ENCODE measurements at regions of chr13 and their contacts with region 1.

Region 1: DNA sequence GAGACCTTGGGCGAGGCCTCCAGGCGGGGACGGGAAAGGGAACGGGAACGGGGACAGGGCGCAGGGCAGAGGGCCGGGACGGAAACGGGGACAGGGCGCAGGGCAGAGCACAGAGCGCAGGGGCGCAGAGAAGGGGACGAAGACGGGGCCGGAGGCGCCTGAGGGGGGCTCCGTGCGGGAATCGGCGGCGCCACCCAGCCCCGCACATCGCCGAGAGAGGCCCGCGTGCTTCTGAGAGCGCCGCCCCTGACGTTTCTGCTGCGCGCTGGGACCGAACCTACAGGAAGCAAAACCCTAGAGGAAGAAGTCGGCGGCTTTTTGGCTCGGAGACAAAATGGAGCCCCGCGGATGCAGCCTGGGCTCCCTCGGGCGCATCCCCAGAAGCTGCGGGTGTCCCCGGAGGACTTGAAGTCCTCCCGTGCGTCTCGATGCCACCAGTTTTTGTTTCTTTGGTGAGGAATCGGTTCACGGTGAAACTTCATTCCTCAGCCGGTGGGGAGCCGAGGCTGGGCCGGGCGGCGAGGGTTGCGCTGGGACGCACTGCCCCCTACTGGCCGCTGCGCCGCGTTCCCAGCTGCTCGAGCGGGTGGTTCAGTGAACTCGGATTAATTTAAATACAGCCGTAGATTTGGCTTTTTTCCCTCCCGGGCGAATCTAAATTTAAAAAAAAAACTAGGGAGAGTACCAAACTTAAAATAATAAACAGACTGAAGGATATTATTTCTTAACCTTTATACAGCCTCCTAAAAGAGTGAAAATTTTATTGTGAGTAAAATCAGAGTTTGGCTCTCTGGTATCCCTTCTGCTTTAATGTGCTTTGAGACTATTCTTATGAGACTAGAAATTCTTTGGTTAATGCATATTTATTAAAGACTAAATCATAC is 350.0 kb upstream of the ARGLU1 start:
- DNase-seq: no peak
- ATAC-seq: peak; percentile 99
- H3K4me3 ChIP-seq: peak overlapping the region; percentile 53 to 75 (median 62); a peak in 5 of 6 replicates
- H3K27ac ChIP-seq: no peak overlapping the region
- H3K4me1 ChIP-seq: peaks cover 6% of the 10 kb centered on the region; the same call in 1 of the 2 replicates
- H3K27me3 ChIP-seq: peaks cover 0 to 6% of the 10 kb centered on the region in 2 experiments; a peak in 2 of 5 replicates
- CTCF ChIP-seq: peak; percentile 88
- EP300 ChIP-seq: no peak
- POLR2A ChIP-seq: no peak
- RAD21 ChIP-seq: peak; percentile 61

Region 2: GRCh38 chr13:106063591-106064313 is 854.2 kb before region 1 on chr13:
- CTCF ChIA-PET with region 1: no interaction called
- POLR2A ChIA-PET with region 1: no interaction called
- in situ Hi-C with region 1: no loop called
- intact Hi-C with region 1: no loop called
- DNase-seq: no peak
- ATAC-seq: no peak
- H3K4me3 ChIP-seq: no peak overlapping the region
- H3K27ac ChIP-seq: no peak overlapping the region
- H3K4me1 ChIP-seq: no peaks in the 10 kb centered on the region
- H3K27me3 ChIP-seq: no peaks in the 10 kb centered on the region
- CTCF ChIP-seq: no peak
- EP300 ChIP-seq: no peak
- POLR2A ChIP-seq: no peak
- RAD21 ChIP-seq: no peak

Region 3: DNA sequence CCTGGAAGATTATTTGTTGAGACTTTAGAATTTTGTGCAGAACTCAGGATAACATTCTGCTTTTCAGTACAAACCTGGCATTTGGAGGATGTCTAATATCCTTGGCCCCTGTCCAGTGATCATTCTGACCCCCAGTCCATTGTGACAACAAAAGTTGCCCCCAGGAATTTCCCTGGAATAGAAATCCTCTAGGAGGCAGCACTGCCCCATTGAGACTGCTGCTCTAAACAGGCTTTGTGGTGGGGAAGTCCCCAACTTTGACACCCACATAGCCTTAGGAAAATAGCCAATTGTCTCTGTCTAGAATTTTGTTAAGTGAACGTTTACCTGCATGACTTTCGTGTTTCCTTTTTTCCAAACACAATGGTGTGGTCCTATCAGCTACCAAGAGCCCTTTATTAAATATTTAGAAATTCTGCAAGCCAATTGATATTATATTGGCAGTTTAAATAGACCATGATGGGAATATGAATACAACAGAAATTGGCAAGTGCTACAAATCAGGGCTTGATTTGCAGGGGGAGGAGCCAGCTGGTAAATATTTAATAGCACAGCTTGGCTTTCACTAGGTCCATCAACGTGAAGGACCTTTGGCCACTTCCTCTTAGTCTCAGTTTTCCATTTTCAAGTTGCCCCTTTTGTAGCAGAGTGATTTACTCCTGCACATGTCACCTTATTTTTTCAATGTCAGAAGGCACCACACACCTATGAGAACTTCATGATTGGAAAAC is 834.1 kb before region 1 on chr13:
- CTCF ChIA-PET with region 1: no interaction called
- POLR2A ChIA-PET with region 1: no interaction called
- in situ Hi-C with region 1: no loop called
- intact Hi-C with region 1: loop called (anchors 10 kb)
- DNase-seq: peak; percentile 6
- ATAC-seq: peak; percentile 51
- H3K4me3 ChIP-seq: no peak overlapping the region
- H3K27ac ChIP-seq: no peak overlapping the region
- H3K4me1 ChIP-seq: no peaks in the 10 kb centered on the region
- H3K27me3 ChIP-seq: no peaks in the 10 kb centered on the region
- CTCF ChIP-seq: peak; percentile 28; the same call in 1 of the 2 replicates
- EP300 ChIP-seq: no peak
- POLR2A ChIP-seq: no peak
- RAD21 ChIP-seq: no peak

Region 4: GRCh38 chr13:106551350-106551749 is 366.6 kb before region 1 on chr13:
- CTCF ChIA-PET with region 1: no interaction called
- POLR2A ChIA-PET with region 1: no interaction called
- in situ Hi-C with region 1: no loop called
- intact Hi-C with region 1: loop called (anchors 5 kb)
- DNase-seq: no peak
- ATAC-seq: no peak
- H3K4me3 ChIP-seq: no peak overlapping the region
- H3K27ac ChIP-seq: no peak overlapping the region
- H3K4me1 ChIP-seq: no peaks in the 10 kb centered on the region
- H3K27me3 ChIP-seq: no peaks in the 10 kb centered on the region
- CTCF ChIP-seq: no peak
- EP300 ChIP-seq: no peak
- POLR2A ChIP-seq: no peak
- RAD21 ChIP-seq: no peak

Region 5: DNA sequence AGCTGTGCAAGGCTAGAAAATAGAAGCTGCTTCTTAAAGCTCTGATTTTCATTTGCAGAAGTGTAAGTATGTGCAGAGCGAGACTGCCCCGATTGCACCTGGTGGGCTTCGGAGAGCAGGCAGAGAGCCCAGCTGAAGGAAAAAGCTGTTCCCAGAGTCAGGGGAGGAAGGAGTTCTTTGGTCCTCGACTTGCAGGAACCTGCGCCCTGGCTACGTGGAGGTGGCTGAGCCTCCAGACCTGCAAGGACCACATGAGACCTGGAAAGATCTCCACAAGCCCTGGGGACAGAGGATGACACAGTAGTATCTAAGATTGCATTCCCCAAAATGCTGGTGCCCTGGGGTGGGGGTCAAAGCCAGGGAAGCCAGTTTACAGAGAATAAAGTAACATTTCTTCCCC is 114.9 kb before region 1 on chr13:
- CTCF ChIA-PET with region 1: no interaction called
- POLR2A ChIA-PET with region 1: no interaction called
- in situ Hi-C with region 1: no loop called
- intact Hi-C with region 1: no loop called
- DNase-seq: no peak
- ATAC-seq: no peak
- H3K4me3 ChIP-seq: no peak overlapping the region
- H3K27ac ChIP-seq: no peak overlapping the region
- H3K4me1 ChIP-seq: no peaks in the 10 kb centered on the region
- H3K27me3 ChIP-seq: no peaks in the 10 kb centered on the region; a peak in 1 of 5 replicates
- CTCF ChIP-seq: no peak
- EP300 ChIP-seq: no peak
- POLR2A ChIP-seq: no peak
- RAD21 ChIP-seq: no peak

Measured in HepG2 (cell line).